Testis (tissue), 5 donors: ENCODE measurements at regions of chr14 and their contacts with region 1.

Region 1: DNA sequence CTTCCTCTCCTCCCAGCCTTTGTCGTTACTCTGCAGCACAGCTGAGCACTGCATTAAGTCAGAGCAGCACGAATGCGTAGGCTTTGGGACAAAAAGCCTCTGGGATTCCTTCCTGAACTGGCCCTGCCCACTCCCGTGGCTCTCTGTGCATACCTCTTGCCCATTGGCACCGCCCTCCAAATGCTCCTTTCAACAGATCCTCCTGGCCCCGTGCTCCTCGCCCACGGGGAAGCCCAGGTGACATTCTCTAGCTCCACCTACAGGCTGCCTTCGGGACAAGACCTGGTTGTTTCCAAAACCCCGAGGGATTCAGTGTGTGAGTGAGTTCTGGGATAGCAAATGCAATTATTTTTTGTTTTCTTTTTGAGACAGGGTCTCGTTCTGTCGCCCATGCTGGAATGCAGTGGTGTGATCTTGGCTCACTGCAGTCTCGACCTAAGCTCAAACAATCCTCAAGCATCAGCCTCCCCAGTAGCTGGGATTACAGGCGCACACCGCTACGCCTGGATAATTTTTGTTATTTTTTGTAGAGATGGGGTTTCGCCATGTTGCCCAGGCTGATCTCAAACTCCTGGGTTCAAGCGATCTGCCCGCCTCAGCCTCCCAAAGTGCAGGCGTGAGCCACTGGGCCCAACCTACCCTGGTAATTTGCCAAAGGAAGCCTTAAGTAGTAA is 17.9 kb upstream of the TDRD9 start:
- DNase-seq: peak; percentile 86
- H3K4me3 ChIP-seq: no peak overlapping the region
- H3K27ac ChIP-seq: no peak overlapping the region
- H3K4me1 ChIP-seq: peaks cover 6% of the 10 kb centered on the region
- H3K27me3 ChIP-seq: no peaks in the 10 kb centered on the region
- CTCF ChIP-seq: peak; percentile 65 to 77 (median 71)
- POLR2A ChIP-seq: no peak

Region 2: GRCh38 chr14:103808403-103809001 is 101.9 kb before region 1 on chr14:
- intact Hi-C with region 1: loop called (anchors 10 kb)
- DNase-seq: peak; percentile 82
- H3K4me3 ChIP-seq: no peak overlapping the region
- H3K27ac ChIP-seq: no peak overlapping the region
- H3K4me1 ChIP-seq: no peaks in the 10 kb centered on the region
- H3K27me3 ChIP-seq: no peaks in the 10 kb centered on the region
- CTCF ChIP-seq: peak; percentile 68 to 82 (median 73)
- POLR2A ChIP-seq: no peak

Region 3: GRCh38 chr14:103989964-103990363 is 79.6 kb after region 1 on chr14:
- intact Hi-C with region 1: no loop called
- DNase-seq: no peak
- H3K4me3 ChIP-seq: no peak overlapping the region
- H3K27ac ChIP-seq: no peak overlapping the region
- H3K4me1 ChIP-seq: no peaks in the 10 kb centered on the region
- H3K27me3 ChIP-seq: no peaks in the 10 kb centered on the region
- CTCF ChIP-seq: no peak
- POLR2A ChIP-seq: no peak

Region 4: DNA sequence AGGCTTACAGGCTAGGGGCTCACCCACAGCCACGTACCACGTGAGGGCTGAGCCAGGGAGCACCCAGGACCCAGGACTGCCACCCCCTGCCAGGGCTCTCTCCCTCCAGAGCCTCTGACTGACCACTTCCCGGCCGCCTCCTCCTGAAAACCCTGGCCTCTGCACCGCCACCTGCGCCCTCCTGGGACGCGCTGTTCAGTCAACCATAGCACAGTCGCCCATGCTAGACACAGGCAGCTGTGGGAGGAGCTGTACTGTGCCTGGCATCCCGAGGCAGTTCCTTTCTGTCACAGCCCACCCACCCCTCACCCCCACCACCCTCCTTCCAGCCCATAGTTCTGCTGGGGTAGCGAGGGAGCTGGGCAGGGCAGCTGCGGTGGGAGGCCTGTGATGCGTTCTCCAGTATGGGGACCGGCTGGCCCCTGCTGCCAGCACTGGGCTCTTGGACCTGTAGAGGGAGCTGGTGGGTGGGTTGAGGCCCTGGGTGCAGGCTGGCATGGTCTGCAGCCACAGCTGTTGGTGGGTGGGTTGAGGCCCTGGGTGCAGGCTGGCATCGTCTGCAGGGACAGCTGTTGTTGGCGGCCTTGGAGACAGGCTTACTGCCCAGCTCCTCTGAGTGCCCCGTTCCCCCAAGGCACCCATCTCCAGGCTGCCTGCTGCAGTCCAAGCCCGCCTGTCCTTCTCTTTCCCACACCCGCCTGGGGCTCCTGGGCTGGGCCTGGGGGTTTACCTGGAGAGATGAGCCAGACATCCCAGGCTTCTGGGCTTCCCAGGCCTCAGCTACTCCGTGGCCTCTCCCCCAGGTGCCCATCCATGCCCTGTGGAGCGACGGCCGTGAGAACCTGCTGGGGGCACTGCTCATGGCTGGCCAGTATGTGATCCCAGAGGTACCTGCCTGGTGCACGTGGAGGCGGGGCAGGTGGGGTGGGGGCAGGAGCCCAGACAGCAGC is 186.6 kb after region 1 on chr14:
- intact Hi-C with region 1: no loop called
- DNase-seq: no peak
- H3K4me3 ChIP-seq: no peak overlapping the region
- H3K27ac ChIP-seq: no peak overlapping the region
- H3K4me1 ChIP-seq: no peaks in the 10 kb centered on the region
- H3K27me3 ChIP-seq: no peaks in the 10 kb centered on the region
- CTCF ChIP-seq: no peak
- POLR2A ChIP-seq: no peak